ENCODE measurements at regions of chr4 and their contacts with region 1.

Region 1: DNA sequence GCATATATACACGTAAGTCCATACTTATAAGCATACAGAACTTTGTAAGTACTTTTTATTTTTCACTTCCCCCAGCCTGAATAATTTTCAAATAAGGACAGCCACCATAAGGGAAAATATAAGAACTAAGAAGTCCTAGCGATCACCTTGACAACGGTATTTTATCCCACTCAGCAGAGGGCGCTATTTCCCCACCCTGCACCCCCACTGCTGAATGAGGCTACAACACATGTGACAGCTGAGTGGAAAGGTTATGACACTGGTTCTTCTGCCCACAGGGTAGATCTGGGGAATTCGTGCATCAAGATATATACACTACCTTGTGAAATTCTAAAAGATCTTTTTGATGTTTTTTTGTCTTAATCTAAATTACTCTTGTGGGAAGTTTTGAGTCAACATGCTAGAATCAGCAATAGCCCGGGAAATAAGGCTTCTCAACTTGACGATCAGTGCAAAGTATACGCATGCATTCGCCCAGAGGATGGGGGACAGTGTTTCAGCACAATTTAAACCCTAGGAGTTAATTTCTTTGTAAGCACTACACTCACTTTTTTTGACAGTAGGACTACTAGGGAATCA is 151.5 kb downstream of the CORIN start:
- DNase-seq: peak; percentile 40
- CTCF ChIP-seq: peak; percentile 77

Region 2: GRCh38 chr4:47945930-47946726 is 259.7 kb after region 1 on chr4:
- in situ Hi-C with region 1: loop called (anchors 10 kb)
- DNase-seq: no peak
- CTCF ChIP-seq: no peak

Region 3: GRCh38 chr4:48093949-48094550 is 407.7 kb after region 1 on chr4:
- in situ Hi-C with region 1: loop called (anchors 25 kb)
- DNase-seq: no peak
- CTCF ChIP-seq: no peak

Measured in GM13977 (cell line).